T-cell (primary cell): ENCODE measurements at regions of chr1 and their contacts with region 1.

Region 1: GRCh38 chr1:243701872-243702271 is 148.2 kb downstream of the AKT3 start:
- DNase-seq: no peak
- ATAC-seq: no peak
- H3K4me3 ChIP-seq: no peak overlapping the region
- H3K4me3 Mint-ChIP-seq: no peak overlapping the region
- H3K27ac ChIP-seq: no peak overlapping the region
- H3K27ac Mint-ChIP-seq: no peak overlapping the region
- H3K4me1 ChIP-seq: no peaks in the 10 kb centered on the region
- H3K4me1 Mint-ChIP-seq: peaks cover 8 to 15% (median 14%) of the 10 kb centered on the region in 3 donors
- H3K27me3 ChIP-seq: no peaks in the 10 kb centered on the region
- H3K27me3 Mint-ChIP-seq: no peaks in the 10 kb centered on the region

Region 2: DNA sequence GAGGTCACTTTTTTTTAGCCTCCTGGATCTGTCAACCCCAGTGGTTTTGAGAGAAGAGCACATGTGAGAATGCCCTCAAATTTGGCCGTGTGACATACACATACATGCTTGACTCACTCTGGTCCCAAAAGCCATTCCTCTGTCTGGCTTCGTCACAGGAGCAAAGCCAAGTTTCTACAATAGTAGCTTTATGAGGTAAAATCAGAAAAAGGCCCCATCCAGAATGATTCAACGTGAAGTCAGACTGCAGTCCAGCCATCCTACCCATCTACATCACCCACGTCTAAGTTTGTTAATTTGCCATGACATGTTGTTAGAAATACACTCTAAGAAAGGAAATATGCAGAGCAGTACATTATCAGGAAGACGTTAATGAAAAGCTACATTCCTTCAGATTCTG is 200.9 kb before region 1 on chr1:
- CTCF ChIA-PET with region 1: no interaction called
- POLR2A ChIA-PET with region 1: interaction called in 1 of 2 experiments, 11 read pairs
- DNase-seq: no peak
- ATAC-seq: no peak
- H3K4me3 ChIP-seq: no peak overlapping the region
- H3K4me3 Mint-ChIP-seq: no peak overlapping the region
- H3K27ac ChIP-seq: no peak overlapping the region
- H3K27ac Mint-ChIP-seq: peak overlapping the region in 1 of 2 donors; percentile 3
- H3K4me1 ChIP-seq: no peaks in the 10 kb centered on the region
- H3K4me1 Mint-ChIP-seq: peaks cover 0 to 2% (median 1%) of the 10 kb centered on the region in 3 donors
- H3K27me3 ChIP-seq: no peaks in the 10 kb centered on the region
- H3K27me3 Mint-ChIP-seq: no peaks in the 10 kb centered on the region

Region 3: GRCh38 chr1:243718893-243719292 is 17.0 kb after region 1 on chr1:
- CTCF ChIA-PET with region 1: no interaction called
- POLR2A ChIA-PET with region 1: no interaction called
- DNase-seq: no peak
- ATAC-seq: no peak
- H3K4me3 ChIP-seq: no peak overlapping the region
- H3K4me3 Mint-ChIP-seq: no peak overlapping the region
- H3K27ac ChIP-seq: no peak overlapping the region
- H3K27ac Mint-ChIP-seq: no peak overlapping the region
- H3K4me1 ChIP-seq: peaks cover 0 to 2% of the 10 kb centered on the region in 2 experiments
- H3K4me1 Mint-ChIP-seq: peaks cover 41 to 59% (median 58%) of the 10 kb centered on the region in 3 donors
- H3K27me3 ChIP-seq: no peaks in the 10 kb centered on the region
- H3K27me3 Mint-ChIP-seq: no peaks in the 10 kb centered on the region